ENCODE measurements at regions of chr11 and their contacts with region 1.

Region 1: DNA sequence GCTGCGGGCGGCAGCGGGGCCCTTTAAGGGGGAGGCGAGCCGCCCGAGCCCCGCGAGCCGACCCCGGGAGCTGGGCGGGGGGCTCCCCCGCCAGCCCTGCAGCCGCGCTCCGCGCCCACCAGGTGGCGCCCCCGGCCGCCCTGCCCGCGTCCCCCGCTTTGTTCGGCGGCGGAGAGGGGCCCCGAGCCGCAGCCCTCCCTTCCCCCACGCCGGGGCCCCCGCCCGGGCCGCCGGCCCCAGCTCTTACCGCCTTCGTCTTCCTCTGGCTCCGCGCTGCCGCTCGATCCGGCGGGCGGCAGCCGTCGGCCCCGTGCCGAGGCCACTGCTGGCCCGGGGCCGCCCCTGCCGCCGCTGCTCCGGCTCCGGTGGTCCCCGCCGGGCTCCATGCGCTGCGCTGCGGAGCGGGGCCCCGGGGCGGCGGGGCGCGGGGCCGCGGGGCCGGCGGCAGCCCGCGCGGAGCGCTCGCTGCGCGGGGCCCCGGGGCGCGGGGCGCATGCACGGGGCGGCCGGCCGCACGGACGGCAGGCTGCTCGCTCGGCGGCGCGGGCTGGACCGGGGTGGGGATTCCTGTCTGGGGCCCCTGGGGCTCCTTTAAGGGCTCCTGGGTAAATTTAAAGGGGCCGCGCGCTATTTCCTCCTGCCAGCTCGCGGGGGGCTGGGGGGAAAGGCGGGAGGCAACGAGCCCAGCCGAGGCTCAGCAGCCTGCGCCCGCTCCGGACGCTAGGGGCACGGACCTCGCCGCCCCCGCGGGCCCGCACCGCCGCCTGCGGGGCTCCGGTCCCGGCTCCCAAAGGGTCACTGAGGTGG is at the start of gene ZFTA:
- DNase-seq: peak; percentile 50
- H3K4me3 Mint-ChIP-seq: peak within 1 kb of the TSS; percentile 97
- H3K27ac Mint-ChIP-seq: peak within 1 kb of the TSS; percentile 68
- H3K4me1 Mint-ChIP-seq: peaks cover 12% of the 10 kb centered on the region
- H3K27me3 Mint-ChIP-seq: no peaks in the 10 kb centered on the region
- CTCF ChIP-seq: peak; percentile 81
- total RNA-seq, gene ZFTA: 2.6 and 5.2 TPM in 2 replicates

Region 2: GRCh38 chr11:63652671-63653070 is 115.8 kb before region 1 on chr11:
- CTCF ChIA-PET with region 1: no interaction called
- POLR2A ChIA-PET with region 1: no interaction called
- intact Hi-C with region 1: no loop called
- DNase-seq: no peak
- H3K4me3 Mint-ChIP-seq: no peak overlapping the region
- H3K27ac Mint-ChIP-seq: no peak overlapping the region
- H3K4me1 Mint-ChIP-seq: no peaks in the 10 kb centered on the region
- H3K27me3 Mint-ChIP-seq: no peaks in the 10 kb centered on the region
- CTCF ChIP-seq: no peak

Region 3: DNA sequence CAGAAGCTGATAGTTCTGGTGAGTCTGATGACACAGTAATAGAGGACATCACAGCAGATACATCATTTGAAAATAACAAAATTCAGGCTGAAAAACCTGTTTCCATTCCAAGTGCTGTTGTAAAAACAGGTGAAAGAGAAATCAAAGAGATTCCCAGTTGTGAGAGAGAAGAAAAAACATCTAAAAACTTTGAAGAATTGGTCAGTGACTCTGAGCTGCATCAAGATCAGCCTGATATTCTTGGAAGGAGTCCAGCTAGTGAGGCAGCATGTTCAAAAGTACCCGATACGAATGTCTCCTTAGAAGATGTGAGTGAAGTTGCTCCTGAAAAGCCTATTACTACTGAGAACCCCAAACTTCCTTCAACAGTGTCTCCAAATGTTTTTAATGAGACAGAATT is 48.5 kb before region 1 on chr11:
- CTCF ChIA-PET with region 1: no interaction called
- POLR2A ChIA-PET with region 1: no interaction called
- intact Hi-C with region 1: no loop called
- DNase-seq: no peak
- H3K4me3 Mint-ChIP-seq: no peak overlapping the region
- H3K27ac Mint-ChIP-seq: no peak overlapping the region
- H3K4me1 Mint-ChIP-seq: peaks cover 3% of the 10 kb centered on the region
- H3K27me3 Mint-ChIP-seq: no peaks in the 10 kb centered on the region
- CTCF ChIP-seq: no peak

Region 4: DNA sequence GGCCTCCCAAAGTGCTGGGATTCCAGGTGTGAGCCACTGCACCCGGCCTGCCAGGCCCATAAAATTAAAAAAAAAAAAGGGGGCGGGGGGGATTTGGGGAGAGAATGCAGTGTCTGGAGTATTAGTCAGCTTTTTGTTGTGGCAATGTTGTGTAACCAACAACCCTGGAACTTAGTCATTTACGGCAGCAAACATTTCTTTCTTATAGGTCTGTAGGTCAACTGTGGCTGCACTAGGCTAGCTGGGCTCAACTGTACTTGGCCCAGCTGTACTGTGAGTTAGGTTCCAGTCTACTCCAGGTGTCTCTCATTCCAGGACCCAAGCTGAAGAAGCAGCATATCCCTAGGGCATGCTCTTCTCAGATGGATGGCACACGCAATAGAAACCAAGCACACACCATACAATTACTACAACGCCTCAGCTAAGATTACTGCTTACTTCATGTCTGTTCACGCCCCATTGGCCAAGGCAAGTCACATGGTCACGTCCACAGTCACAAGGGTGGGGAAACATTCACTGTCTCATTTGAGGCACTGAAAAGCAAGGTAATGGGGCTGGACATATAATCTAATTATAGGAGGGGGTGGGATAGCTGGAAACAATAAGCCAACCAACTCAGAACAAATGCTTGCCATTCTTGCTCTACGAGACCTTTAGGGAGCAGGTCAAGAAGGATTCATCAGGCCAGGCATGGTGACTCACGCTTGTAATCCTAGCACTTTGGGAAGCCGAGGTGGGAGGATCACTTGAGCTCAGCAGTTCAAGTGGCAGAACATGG is 34.4 kb after region 1 on chr11:
- CTCF ChIA-PET with region 1: interaction called, 5 read pairs
- POLR2A ChIA-PET with region 1: interaction called, 14 read pairs
- intact Hi-C with region 1: loop called (anchors 2 kb)
- DNase-seq: peak; percentile 90
- H3K4me3 Mint-ChIP-seq: peak overlapping the region; percentile 67
- H3K27ac Mint-ChIP-seq: peak overlapping the region; percentile 85
- H3K4me1 Mint-ChIP-seq: peaks cover 9% of the 10 kb centered on the region
- H3K27me3 Mint-ChIP-seq: no peaks in the 10 kb centered on the region
- CTCF ChIP-seq: no peak

Region 5: DNA sequence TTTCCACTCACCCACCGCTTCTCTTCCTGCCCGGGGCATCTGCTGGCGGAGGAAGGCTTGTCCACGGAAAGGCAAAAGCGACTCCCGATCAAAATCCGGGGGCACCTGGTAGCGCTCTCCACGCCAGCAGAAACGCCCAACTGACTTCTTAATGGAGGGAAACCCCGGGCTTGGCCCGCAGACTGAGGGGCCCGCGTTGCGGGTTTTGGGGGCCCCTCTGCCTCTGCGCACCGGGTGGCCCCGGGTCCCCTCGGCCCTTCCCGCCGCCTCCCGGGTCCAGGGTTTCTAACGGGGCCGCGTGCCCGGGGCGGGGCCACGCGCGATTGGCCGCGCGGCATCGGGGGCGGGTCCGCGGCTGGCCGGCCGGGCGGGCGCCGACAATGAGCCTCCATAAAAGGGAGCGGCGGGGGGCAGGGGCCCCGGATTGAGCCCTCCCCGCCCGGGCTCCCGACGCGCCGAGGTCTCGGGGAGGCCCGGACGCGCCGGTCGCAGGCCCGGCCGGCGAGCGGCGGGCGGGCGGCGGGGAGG is 44.7 kb after region 1 on chr11 and contains the start of gene SPINDOC:
- CTCF ChIA-PET with region 1: interaction called, 6 read pairs
- POLR2A ChIA-PET with region 1: interaction called, 6 read pairs
- intact Hi-C with region 1: loop called (anchors 2 kb)
- DNase-seq: peak; percentile 68
- H3K4me3 Mint-ChIP-seq: peak within 1 kb of the TSS; percentile 75
- H3K27ac Mint-ChIP-seq: no peak within 1 kb of the TSS
- H3K4me1 Mint-ChIP-seq: peaks cover 26% of the 10 kb centered on the region
- H3K27me3 Mint-ChIP-seq: no peaks in the 10 kb centered on the region
- CTCF ChIP-seq: no peak
- total RNA-seq, gene SPINDOC: 17.1 and 21.4 TPM in 2 replicates

Region 6: GRCh38 chr11:63871962-63872799 is 103.7 kb after region 1 on chr11:
- CTCF ChIA-PET with region 1: no interaction called
- POLR2A ChIA-PET with region 1: no interaction called
- intact Hi-C with region 1: loop called (anchors 1 kb)
- DNase-seq: peak; percentile 97
- H3K4me3 Mint-ChIP-seq: peak overlapping the region; percentile 33
- H3K27ac Mint-ChIP-seq: no peak overlapping the region
- H3K4me1 Mint-ChIP-seq: peaks cover 32% of the 10 kb centered on the region
- H3K27me3 Mint-ChIP-seq: no peaks in the 10 kb centered on the region
- CTCF ChIP-seq: peak; percentile 16

Region 7: DNA sequence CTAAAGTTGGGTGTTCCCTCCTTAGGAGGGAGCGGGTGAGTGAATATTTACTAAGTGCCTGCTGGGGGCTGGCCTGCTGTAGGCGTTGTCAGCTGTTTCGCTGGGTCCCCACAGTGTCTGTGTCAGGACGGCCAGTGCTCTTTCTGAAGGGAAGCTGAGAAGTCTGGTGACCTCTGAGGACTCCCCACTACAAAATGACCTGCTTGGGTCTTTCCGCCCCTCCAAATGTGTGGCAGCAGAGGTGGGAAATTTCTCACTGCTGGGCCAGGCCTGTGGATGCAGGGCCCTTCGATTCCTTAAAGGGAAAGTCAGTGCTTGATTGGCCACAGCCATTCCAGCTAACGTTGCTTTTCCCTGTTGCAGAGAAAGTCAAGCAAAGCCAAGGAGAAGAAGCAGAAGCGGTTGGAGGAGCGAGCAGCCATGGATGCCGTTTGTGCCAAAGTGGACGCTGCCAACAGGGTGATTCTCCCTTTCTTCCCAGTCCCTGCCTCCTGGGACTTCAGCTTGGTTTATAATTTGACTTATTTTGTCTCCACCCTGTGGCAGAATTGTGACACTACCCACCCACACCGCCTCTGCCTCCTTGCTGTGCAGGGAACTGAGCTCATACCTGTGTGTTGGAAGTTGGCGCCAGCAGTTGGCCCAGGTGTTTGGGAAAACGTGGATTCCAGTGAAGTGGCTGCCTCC is 177.2 kb after region 1 on chr11:
- CTCF ChIA-PET with region 1: interaction called, 36 read pairs
- POLR2A ChIA-PET with region 1: interaction called, 4 read pairs
- intact Hi-C with region 1: loop called (anchors 1 kb)
- DNase-seq: peak; percentile 75
- H3K4me3 Mint-ChIP-seq: no peak overlapping the region
- H3K27ac Mint-ChIP-seq: no peak overlapping the region
- H3K4me1 Mint-ChIP-seq: no peaks in the 10 kb centered on the region
- H3K27me3 Mint-ChIP-seq: no peaks in the 10 kb centered on the region
- CTCF ChIP-seq: peak; percentile 63

Region 8: DNA sequence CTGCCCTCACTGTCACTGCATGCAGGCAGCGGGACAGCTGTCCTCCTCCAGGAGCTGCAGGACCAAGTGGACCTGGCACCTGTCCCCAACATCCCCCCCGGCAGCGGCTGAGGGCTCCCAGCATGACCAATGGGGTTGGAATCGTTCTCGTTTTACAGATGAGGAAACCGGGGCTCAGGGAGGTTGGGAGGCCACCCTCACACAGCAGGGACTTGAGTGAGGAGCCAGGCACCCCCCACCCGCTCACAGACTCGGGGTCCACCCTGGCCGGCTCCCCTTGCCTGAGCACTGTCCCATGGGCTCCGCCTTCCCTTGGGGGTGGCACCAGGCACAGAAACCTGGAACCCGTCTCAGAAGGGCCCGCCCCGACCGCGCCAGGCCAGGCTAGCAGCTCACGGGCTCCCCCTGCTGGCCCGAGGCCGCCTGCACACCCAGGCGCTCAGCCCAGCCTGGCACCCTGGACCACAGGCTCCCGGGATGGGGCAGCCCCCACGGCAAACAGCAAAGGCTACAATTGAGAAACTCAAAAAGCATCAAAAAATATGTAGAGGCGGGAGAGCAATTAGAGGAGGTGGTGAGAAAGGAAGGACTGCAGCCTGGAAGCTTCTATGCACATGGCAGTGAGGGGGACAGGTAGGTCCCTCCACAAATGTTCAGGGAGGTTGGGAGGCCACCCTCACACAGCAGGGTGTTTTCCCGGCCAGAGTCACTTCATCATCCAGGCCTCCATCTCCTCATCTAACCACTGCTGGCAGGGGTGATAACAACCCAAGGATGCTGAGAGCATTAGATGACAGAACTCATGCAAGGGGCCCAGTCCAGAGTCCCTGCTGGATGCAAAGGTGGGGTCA is 384.6 kb after region 1 on chr11:
- CTCF ChIA-PET with region 1: interaction called, 5 read pairs
- POLR2A ChIA-PET with region 1: no interaction called
- intact Hi-C with region 1: loop called (anchors 1 kb)
- DNase-seq: peak; percentile 53
- H3K4me3 Mint-ChIP-seq: no peak overlapping the region
- H3K27ac Mint-ChIP-seq: no peak overlapping the region
- H3K4me1 Mint-ChIP-seq: no peaks in the 10 kb centered on the region
- H3K27me3 Mint-ChIP-seq: no peaks in the 10 kb centered on the region
- CTCF ChIP-seq: peak; percentile 98